ENCODE measurements at regions of chr4 and their contacts with region 1.

Region 1: DNA sequence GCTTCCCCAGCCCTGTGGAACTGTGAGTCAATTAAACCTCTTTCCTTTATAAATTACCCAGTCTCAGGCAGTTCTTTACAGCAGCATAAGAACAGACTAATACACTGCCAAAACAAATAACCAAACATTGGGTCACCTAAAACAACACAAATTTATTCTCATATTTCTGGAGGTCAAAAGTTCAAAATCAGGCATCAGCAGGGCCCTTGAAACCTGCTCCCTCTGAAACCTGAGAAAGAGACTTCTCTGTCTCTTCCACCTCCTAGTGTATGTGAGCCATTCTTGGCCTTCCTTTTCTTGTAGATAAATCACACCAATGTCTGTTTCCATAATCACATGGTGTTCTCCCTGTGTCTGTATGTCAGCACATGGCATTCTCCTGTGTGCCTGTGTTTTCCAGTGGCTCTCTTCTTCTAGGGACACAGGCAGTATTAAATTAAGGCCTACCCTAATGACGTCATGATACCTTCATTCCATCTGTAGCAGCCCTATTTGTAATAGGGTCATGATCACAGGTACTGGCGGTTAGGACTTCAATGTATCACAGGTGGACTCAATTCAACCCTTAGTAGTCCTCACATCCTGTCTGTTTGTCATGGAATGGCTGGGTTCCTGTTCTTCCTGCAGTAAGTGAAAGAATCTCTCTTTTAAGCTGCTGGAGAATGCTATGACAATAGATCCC is 147.3 kb upstream of the CLNK start:
- DNase-seq: no peak
- ATAC-seq: no peak
- H3K4me3 ChIP-seq: no peak overlapping the region
- H3K4me3 Mint-ChIP-seq: no peak overlapping the region
- H3K27ac ChIP-seq: no peak overlapping the region
- H3K27ac Mint-ChIP-seq: no peak overlapping the region
- H3K4me1 ChIP-seq: no peaks in the 10 kb centered on the region
- H3K4me1 Mint-ChIP-seq: no peaks in the 10 kb centered on the region
- H3K27me3 ChIP-seq: no peaks in the 10 kb centered on the region
- H3K27me3 Mint-ChIP-seq: no peaks in the 10 kb centered on the region
- CTCF ChIP-seq: no peak

Region 2: DNA sequence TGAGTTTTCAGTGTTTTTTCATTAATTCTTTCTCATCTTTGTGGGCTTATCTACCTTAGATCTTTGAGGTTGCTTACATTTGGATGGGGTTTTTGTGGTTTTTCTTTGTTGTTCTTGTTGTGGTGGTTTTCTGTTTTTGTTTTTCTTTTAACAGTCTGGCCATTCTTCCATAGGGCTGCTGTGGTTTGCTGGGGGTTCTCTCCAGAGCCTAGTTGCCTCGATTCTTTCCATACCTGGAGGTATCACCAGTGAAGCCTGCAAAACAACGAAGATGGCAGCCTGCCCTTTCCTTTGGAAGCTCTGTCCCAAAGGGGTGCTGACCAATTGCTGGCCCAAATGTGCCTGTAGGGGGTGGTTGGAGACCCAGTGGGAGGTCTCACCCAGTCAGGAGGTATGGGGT is 21.3 kb after region 1 on chr4:
- CTCF ChIA-PET with region 1: no interaction called
- POLR2A ChIA-PET with region 1: no interaction called
- intact Hi-C with region 1: loop called in 1 of 2 experiments (anchors 1 kb)
- DNase-seq: no peak
- ATAC-seq: no peak
- H3K4me3 ChIP-seq: no peak overlapping the region
- H3K4me3 Mint-ChIP-seq: no peak overlapping the region
- H3K27ac ChIP-seq: no peak overlapping the region
- H3K27ac Mint-ChIP-seq: no peak overlapping the region
- H3K4me1 ChIP-seq: no peaks in the 10 kb centered on the region
- H3K4me1 Mint-ChIP-seq: peaks cover 4% of the 10 kb centered on the region
- H3K27me3 ChIP-seq: no peaks in the 10 kb centered on the region
- H3K27me3 Mint-ChIP-seq: no peaks in the 10 kb centered on the region
- CTCF ChIP-seq: no peak